AG04450 (cell line): ENCODE measurements at regions of chr19 and their contacts with region 1.

Region 1: GRCh38 chr19:10000171-10000826 is 10.0 kb downstream of the COL5A3 start:
- DNase-seq: no peak
- H3K4me3 ChIP-seq: no peak overlapping the region
- H3K27ac ChIP-seq: no peak overlapping the region
- H3K27me3 ChIP-seq: no peaks in the 10 kb centered on the region
- CTCF ChIP-seq: peak; percentile 95

Region 2: GRCh38 chr19:9932835-9933234 is 67.5 kb before region 1 on chr19:
- CTCF ChIA-PET with region 1: interaction called, 59 read pairs
- POLR2A ChIA-PET with region 1: no interaction called
- DNase-seq: no peak
- H3K4me3 ChIP-seq: no peak overlapping the region
- H3K27ac ChIP-seq: no peak overlapping the region
- H3K27me3 ChIP-seq: peaks cover 22% of the 10 kb centered on the region
- CTCF ChIP-seq: no peak

Region 3: DNA sequence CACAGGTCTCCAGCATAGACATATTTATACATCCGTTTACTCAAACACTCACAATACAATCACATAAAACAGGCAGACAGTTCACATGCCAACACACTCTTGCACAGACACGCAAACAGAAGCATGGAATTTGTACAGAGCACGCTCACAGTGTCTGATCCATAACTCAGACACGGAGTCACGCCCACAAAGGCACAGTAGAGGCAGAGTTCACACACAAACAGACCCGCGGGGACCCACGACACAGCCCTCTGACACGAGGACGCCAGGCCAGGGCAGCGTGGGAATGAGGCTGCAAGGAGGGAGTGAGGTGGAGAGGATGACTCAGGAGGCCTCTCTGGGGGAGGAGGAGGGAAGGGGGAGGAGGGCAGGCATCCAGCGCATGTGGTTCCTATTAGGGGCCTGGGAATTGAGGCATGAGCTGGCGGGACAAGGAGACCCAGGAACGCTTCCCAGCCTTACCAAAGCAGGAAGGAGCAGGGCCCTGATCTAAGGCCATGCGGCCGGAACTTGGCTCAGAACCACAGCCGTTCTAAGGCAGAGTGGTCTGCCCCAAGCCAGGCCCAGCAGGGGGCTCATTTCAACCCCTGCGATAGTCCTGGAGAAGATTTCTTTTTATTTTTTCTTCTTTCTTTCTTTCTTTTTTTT is 54.9 kb before region 1 on chr19:
- CTCF ChIA-PET with region 1: interaction called, 28 read pairs
- POLR2A ChIA-PET with region 1: interaction called, 11 read pairs
- DNase-seq: peak; percentile 97
- H3K4me3 ChIP-seq: peak overlapping the region; percentile 47
- H3K27ac ChIP-seq: peak overlapping the region; percentile 98
- H3K27me3 ChIP-seq: no peaks in the 10 kb centered on the region
- CTCF ChIP-seq: peak; percentile 42

Region 4: DNA sequence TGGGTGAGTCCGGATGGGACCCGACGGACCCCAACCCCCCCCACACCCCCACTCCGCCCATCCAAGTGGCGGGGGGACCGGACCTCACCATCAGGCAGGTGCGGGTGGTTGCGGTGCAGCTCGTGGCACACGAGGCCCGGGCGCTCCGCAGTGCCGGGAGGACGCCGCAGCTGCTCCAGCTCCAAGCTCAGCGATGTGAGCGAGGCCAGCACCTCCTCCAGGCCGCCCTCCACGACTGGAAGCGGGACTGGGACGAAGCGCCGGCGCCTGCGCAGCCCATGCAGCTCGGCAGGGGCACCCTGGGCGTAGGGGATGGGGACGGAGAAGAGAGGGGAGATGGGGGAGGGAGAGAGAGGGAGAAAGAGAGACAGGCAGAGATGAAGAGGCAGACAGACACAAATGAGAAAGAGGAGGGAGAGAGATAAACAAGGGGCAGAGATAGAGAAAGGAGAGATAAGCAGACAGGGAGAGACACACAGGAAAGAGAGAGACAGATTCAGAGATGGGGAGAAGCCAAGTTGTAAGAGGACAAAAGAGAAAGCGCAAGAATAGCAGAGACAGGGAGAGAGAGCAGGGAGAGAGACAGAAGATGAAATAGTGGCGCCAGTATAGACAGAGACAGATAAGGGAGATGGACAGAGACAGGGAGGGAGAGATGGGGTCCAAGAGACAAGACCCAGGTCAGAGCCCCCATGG is 33.7 kb before region 1 on chr19:
- CTCF ChIA-PET with region 1: interaction called, 14 read pairs
- POLR2A ChIA-PET with region 1: no interaction called
- DNase-seq: no peak
- H3K4me3 ChIP-seq: no peak overlapping the region
- H3K27ac ChIP-seq: no peak overlapping the region
- H3K27me3 ChIP-seq: no peaks in the 10 kb centered on the region
- CTCF ChIP-seq: no peak

Region 5: GRCh38 chr19:10018263-10018662 is 18.0 kb after region 1 on chr19:
- CTCF ChIA-PET with region 1: interaction called, 30 read pairs
- POLR2A ChIA-PET with region 1: no interaction called
- DNase-seq: no peak
- H3K4me3 ChIP-seq: no peak overlapping the region
- H3K27ac ChIP-seq: no peak overlapping the region
- H3K27me3 ChIP-seq: no peaks in the 10 kb centered on the region
- CTCF ChIP-seq: no peak

Region 6: GRCh38 chr19:10085641-10086590 is 85.6 kb after region 1 on chr19 and contains the start of gene SHFL:
- CTCF ChIA-PET with region 1: no interaction called
- POLR2A ChIA-PET with region 1: no interaction called
- DNase-seq: no peak
- H3K4me3 ChIP-seq: peak within 1 kb of the TSS; percentile 92
- H3K27ac ChIP-seq: no peak within 1 kb of the TSS
- H3K27me3 ChIP-seq: no peaks in the 10 kb centered on the region
- CTCF ChIP-seq: no peak
- polyA plus RNA-seq, gene SHFL: 25.0 and 25.9 TPM in 2 replicates

Region 7: GRCh38 chr19:10120538-10121189 is 120.4 kb after region 1 on chr19:
- CTCF ChIA-PET with region 1: no interaction called
- POLR2A ChIA-PET with region 1: no interaction called
- DNase-seq: peak; percentile 50
- H3K4me3 ChIP-seq: no peak overlapping the region
- H3K27ac ChIP-seq: peak overlapping the region; percentile 63
- H3K27me3 ChIP-seq: no peaks in the 10 kb centered on the region
- CTCF ChIP-seq: no peak

Region 8: DNA sequence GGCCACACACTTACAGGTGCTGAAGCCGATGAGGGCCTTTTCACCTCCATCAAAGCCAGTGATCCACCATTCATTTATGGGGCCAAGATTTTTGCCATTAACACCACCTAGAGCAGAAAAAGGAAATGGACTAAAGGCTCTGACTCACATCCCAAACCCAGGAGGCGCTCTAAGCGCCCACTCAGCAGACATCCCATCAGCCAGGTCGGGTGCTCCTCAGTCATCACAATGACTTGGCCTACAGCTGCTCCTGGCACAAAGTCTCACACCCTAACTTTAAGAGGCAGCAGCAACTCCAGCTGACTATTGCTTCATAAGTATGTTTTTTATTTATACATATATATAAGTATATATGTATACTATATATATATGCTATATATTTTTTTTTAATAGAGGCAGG is 155.5 kb after region 1 on chr19:
- CTCF ChIA-PET with region 1: no interaction called
- POLR2A ChIA-PET with region 1: no interaction called
- DNase-seq: no peak
- H3K4me3 ChIP-seq: no peak overlapping the region
- H3K27ac ChIP-seq: no peak overlapping the region
- H3K27me3 ChIP-seq: no peaks in the 10 kb centered on the region
- CTCF ChIP-seq: no peak